Naive thymus-derived CD4-positive, alpha-beta T cell (primary cell): ENCODE measurements at regions of chr1 and their contacts with region 1.

Region 1: GRCh38 chr1:198575798-198576641 is 35.5 kb upstream of the ATP6V1G3 start:
- DNase-seq: no peak
- ATAC-seq: no peak
- H3K4me3 ChIP-seq: no peak overlapping the region
- H3K4me3 Mint-ChIP-seq: peak overlapping the region in 1 of 10 donors; percentile 9
- H3K27ac ChIP-seq: no peak overlapping the region
- H3K27ac Mint-ChIP-seq: peak overlapping the region in 6 of 9 donors; percentile 9 to 74 (median 40)
- H3K4me1 ChIP-seq: no peaks in the 10 kb centered on the region
- H3K4me1 Mint-ChIP-seq: peaks cover 0 to 47% (median 26%) of the 10 kb centered on the region in 7 donors
- H3K27me3 ChIP-seq: no peaks in the 10 kb centered on the region
- H3K27me3 Mint-ChIP-seq: no peaks in the 10 kb centered on the region

Region 2: DNA sequence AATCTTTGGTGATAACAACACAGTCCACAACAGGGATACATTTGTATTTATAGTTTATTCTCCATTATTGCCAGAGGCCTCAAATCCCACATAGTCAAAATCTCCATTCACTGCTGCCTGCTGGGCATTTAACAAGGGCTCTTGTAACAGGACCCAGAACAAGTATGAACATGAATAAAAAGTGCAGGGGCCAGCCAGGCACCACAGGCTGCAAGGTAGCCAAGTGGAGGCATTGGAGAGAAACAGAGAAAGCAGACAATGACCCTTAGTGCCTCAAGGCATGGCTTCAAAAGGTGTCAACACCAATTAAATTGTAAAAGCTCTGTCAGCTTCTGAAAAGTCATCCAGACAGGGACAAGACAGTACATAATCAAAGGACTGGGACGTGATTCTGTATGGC is 152.3 kb before region 1 on chr1:
- CTCF ChIA-PET with region 1: no interaction called
- POLR2A ChIA-PET with region 1: no interaction called
- intact Hi-C with region 1: no loop called
- DNase-seq: no peak
- ATAC-seq: no peak
- H3K4me3 ChIP-seq: no peak overlapping the region
- H3K4me3 Mint-ChIP-seq: no peak overlapping the region
- H3K27ac ChIP-seq: no peak overlapping the region
- H3K27ac Mint-ChIP-seq: no peak overlapping the region
- H3K4me1 ChIP-seq: no peaks in the 10 kb centered on the region
- H3K4me1 Mint-ChIP-seq: no peaks in the 10 kb centered on the region
- H3K27me3 ChIP-seq: no peaks in the 10 kb centered on the region
- H3K27me3 Mint-ChIP-seq: peaks cover 0 to 28% (median 0%) of the 10 kb centered on the region in 5 donors

Region 3: GRCh38 chr1:198563583-198563982 is 12.4 kb before region 1 on chr1:
- CTCF ChIA-PET with region 1: interaction called, 3 read pairs
- POLR2A ChIA-PET with region 1: interaction called, 7 read pairs
- intact Hi-C with region 1: loop called in 1 of 2 experiments (anchors 1 kb)
- DNase-seq: no peak
- ATAC-seq: no peak
- H3K4me3 ChIP-seq: no peak overlapping the region
- H3K4me3 Mint-ChIP-seq: peak overlapping the region in 2 of 10 donors; percentile 5 to 60
- H3K27ac ChIP-seq: no peak overlapping the region
- H3K27ac Mint-ChIP-seq: peak overlapping the region in 6 of 9 donors; percentile 32 to 81 (median 55)
- H3K4me1 ChIP-seq: peaks cover 40 to 57% of the 10 kb centered on the region in 2 donors
- H3K4me1 Mint-ChIP-seq: peaks cover 17 to 88% (median 74%) of the 10 kb centered on the region in 7 donors
- H3K27me3 ChIP-seq: no peaks in the 10 kb centered on the region
- H3K27me3 Mint-ChIP-seq: no peaks in the 10 kb centered on the region